ENCODE measurements at regions of chr4 and their contacts with region 1.

Region 1: DNA sequence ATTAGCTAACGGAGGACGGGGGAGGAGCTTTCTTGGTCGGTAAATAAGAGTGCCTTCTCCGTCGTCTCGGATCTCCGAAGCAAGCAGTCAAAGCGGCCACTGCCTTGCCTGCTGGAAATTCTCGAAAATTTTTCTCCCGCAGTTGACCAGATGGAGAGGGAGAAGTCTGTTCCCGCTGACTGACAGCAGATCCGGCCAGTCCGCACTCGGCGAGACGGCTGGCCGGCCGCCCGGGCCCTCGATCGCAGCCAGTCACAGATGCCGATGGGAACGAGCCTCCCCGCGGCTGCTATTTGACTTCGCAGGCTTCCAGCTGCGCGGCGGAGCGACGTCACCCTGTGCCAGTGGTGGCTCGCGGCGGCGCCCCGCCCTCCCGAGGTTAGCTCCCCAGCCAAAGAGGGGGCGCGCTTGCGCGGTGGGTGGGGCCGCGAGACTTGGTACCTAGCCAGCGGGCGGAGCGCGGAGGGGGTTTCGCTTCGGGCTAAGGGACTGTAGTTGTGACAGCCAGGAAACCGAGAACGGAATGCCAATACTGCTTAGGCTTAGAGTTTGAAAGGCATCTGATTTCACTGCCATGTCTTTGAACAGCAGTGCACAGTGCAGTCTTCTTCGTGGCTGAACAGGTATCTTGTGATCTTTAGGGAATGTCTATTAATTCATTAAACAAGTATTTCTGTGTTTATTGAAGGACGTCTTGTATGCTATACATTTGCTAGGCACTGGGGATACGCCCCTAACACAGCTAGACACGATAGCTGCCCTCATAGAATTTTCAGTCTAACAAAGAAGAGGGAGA is at the start of gene PPM1K:
- DNase-seq: peak; percentile 100
- ATAC-seq: peak; percentile 95 to 98 (median 96)
- H3K4me3 ChIP-seq: peak within 1 kb of the TSS; percentile 88
- H3K27ac ChIP-seq: peak within 1 kb of the TSS; percentile 98
- H3K4me1 ChIP-seq: peaks cover 40% of the 10 kb centered on the region
- H3K27me3 ChIP-seq: no peaks in the 10 kb centered on the region
- CTCF ChIP-seq: peak; percentile 7
- total RNA-seq, gene PPM1K: 3.3 to 18.0 (median 9.0) TPM

Region 2: DNA sequence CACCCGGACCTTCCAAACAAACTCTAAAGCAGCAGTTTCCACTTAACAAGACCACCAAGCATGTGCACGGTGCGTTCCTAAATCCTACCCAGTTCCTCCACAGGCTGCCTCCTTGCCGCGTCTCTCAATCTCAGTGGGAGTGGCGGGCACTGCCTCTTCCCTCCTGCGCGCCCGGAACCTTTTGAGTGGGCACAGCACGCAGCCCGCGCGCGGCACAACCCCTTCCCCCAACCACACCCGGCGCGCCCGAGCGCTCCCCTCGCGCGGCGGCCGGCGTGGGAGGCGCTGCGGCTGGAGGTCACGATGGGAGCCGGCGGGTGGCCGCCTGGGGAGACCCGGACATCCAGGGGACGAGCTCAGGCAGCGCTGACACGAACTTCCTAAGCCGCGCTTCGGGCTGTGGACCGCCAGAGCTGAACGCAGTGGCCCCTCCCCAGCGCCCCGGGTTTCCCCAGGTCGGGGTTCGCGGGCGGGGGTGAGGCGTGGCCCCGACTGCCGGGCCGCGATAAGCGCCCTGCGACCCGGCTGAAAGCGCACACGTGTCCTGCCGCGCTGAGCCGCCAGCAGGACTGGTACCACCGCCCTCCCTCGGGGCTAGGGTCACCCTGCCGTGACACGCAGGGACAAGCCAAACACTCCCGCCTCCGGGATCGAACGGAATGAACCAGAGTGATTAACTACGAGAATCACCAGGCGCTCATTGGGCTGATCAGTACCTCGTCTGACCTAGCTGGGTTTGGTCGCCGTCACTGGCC is 126.0 kb before region 1 on chr4 and contains the start of gene ABCG2:
- intact Hi-C with region 1: no loop called
- DNase-seq: peak in 1 of 2 donors; percentile 26
- ATAC-seq: peak; percentile 30 to 61 (median 44)
- H3K4me3 ChIP-seq: peak within 1 kb of the TSS; percentile 69
- H3K27ac ChIP-seq: no peak within 1 kb of the TSS
- H3K4me1 ChIP-seq: no peaks in the 10 kb centered on the region
- H3K27me3 ChIP-seq: peaks cover 0 to 15% (median 0%) of the 10 kb centered on the region in 3 donors
- CTCF ChIP-seq: no peak
- total RNA-seq, gene ABCG2: 0.19 to 1.8 (median 0.57) TPM

Region 3: GRCh38 chr4:88225232-88226105 is 59.2 kb before region 1 on chr4:
- intact Hi-C with region 1: loop called in 1 of 2 experiments (anchors 10 kb)
- DNase-seq: no peak
- ATAC-seq: no peak
- H3K4me3 ChIP-seq: no peak overlapping the region
- H3K27ac ChIP-seq: no peak overlapping the region
- H3K4me1 ChIP-seq: peaks cover 2% of the 10 kb centered on the region
- H3K27me3 ChIP-seq: no peaks in the 10 kb centered on the region
- CTCF ChIP-seq: no peak

Region 4: GRCh38 chr4:88244816-88245579 is 39.6 kb before region 1 on chr4:
- intact Hi-C with region 1: loop called (anchors 2 to 5 kb)
- DNase-seq: peak; percentile 77 to 86
- ATAC-seq: peak; percentile 88 to 93 (median 90)
- H3K4me3 ChIP-seq: peak overlapping the region; percentile 59
- H3K27ac ChIP-seq: peak overlapping the region; percentile 93
- H3K4me1 ChIP-seq: peaks cover 38% of the 10 kb centered on the region
- H3K27me3 ChIP-seq: no peaks in the 10 kb centered on the region
- CTCF ChIP-seq: no peak

Region 5: GRCh38 chr4:88378691-88379559 is 94.3 kb after region 1 on chr4 and contains the start of gene HERC6:
- intact Hi-C with region 1: loop called in 1 of 2 experiments (anchors 10 kb)
- DNase-seq: peak; percentile 73 to 81
- ATAC-seq: peak; percentile 95 to 98 (median 97)
- H3K4me3 ChIP-seq: peak within 1 kb of the TSS; percentile 99
- H3K27ac ChIP-seq: peak within 1 kb of the TSS; percentile 76
- H3K4me1 ChIP-seq: no peaks in the 10 kb centered on the region
- H3K27me3 ChIP-seq: no peaks in the 10 kb centered on the region
- CTCF ChIP-seq: peak; percentile 61
- total RNA-seq, gene HERC6: 0.86 to 2.7 (median 1.8) TPM

Region 6: DNA sequence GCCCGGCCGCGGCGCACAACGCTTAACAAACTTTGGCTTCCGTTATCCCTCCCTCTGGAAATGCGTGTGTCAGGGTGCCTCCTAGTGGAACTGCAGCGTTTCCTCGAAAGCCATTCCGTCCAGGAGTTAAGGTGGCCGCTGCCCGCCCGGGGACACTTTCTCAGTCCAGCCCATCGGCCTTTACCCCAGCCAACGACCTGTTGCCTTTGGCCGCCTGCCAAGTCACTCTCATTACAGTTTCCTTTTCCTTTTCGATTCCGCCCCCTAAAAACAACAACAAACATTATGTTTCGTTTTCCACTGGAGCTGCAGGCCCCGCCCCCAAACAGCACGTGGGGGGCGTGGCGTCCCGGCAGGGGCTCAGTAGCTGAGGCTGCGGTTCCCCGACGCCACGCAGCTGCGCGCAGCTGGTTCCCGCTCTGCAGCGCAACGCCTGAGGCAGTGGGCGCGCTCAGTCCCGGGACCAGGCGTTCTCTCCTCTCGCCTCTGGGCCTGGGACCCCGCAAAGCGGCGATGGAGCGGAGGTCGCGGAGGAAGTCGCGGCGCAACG is 172.2 kb after region 1 on chr4 and contains the start of gene HERC5:
- intact Hi-C with region 1: loop called in 1 of 2 experiments (anchors 5 kb)
- DNase-seq: peak; percentile 91 to 93
- ATAC-seq: peak; percentile 87 to 93 (median 92)
- H3K4me3 ChIP-seq: peak within 1 kb of the TSS; percentile 82
- H3K27ac ChIP-seq: peak within 1 kb of the TSS; percentile 60
- H3K4me1 ChIP-seq: no peaks in the 10 kb centered on the region
- H3K27me3 ChIP-seq: no peaks in the 10 kb centered on the region
- CTCF ChIP-seq: peak; percentile 62
- total RNA-seq, gene HERC5: 0.42 to 2.8 (median 1.3) TPM

Region 7: GRCh38 chr4:88523325-88524129 is 238.9 kb after region 1 on chr4 and contains the start of gene PYURF:
- intact Hi-C with region 1: loop called in 1 of 2 experiments (anchors 5 kb)
- DNase-seq: peak; percentile 97
- ATAC-seq: peak; percentile 97 to 98 (median 97)
- H3K4me3 ChIP-seq: peak within 1 kb of the TSS; percentile 96
- H3K27ac ChIP-seq: peak within 1 kb of the TSS; percentile 95
- H3K4me1 ChIP-seq: peaks cover 12% of the 10 kb centered on the region
- H3K27me3 ChIP-seq: no peaks in the 10 kb centered on the region
- CTCF ChIP-seq: no peak
- total RNA-seq, gene PYURF: 51.8 to 82.8 (median 58.3) TPM

Measured in psoas muscle (tissue), 8 donors.